GM10248 (cell line): ENCODE measurements at regions of chr2 and their contacts with region 1.

Region 1: DNA sequence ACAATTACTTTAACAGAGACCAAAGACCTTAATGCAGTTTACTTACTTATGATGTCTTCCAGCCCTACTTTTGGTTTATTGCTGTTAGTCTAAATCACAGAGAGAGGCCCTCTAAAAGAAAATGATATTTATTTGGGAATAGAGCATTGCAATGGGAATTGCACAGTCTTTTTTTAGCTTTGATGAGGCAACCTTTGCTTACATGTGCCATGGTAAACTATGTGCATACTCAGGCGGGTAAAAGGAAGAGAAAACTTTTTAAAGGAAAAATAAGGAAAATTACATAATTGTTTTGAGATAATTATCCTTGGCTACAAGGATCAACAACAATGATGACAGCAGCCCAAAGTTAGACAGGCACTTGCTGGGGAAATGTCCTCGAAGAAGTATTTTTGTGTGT is 78.6 kb downstream of the EFEMP1 start:
- DNase-seq: no peak
- CTCF ChIP-seq: no peak

Region 2: DNA sequence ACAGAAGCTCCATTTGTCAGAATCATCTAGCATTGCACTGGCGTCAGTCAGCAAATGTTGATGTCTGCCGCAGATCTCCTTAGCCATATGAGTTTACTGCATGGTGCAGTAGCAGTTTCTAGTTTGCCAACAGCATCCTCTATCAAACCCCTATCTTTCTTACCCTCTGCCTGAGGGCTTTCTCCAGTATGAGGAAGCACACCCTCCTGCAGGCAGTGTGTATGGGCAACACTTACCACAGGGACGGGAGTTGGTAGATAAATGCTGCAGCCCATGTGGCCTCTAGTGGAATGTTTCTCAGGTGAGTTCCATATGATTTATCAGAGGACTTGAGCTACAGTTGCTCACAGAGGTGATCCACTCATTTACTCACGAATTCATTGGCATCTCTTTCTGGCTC is 14.9 kb after region 1 on chr2:
- CTCF ChIA-PET with region 1: interaction called, 10 read pairs
- POLR2A ChIA-PET with region 1: no interaction called
- DNase-seq: no peak
- CTCF ChIP-seq: no peak